ENCODE measurements at regions of chr11 and their contacts with region 1.

Region 1: DNA sequence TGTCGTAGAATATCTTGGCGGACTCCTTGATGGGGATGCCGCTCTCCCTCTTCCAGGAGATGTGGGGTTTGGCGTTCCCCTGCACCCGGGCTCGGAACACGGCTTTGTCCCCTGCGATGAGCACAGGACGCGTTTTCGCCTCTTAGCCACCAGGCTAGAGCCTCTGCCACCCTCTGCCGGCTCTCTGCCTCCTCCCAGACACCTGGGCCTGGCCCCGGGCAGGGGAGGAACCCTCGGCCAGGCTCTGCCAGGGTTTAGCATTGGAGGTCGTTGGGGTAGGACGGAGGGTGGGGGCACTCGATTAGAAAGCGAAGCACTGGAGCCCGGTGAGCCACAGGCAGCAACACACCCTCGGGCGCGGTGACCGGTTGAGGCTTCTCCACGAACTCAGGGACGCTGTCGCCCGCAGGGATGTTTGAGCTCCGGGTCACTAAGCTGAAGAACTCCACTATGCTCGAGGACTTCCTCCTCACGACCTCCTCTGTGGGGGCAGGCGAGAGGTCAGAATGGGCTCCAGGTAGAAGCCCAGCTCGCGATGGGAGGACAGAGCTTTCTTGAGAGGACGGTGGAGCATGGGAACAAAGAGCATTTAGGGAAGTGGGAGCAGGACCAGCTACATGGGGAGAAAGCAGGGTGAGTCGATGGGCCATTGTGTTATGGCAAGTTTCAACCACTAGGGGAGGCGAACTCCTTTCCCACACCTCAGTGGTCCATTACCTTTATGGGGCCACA is 4.3 kb downstream of the IGSF22 start:
- DNase-seq: peak; percentile 71
- ATAC-seq: peak; percentile 66
- H3K4me3 Mint-ChIP-seq: peak overlapping the region; percentile 76
- H3K27ac Mint-ChIP-seq: peak overlapping the region; percentile 67
- H3K4me1 Mint-ChIP-seq: no peaks in the 10 kb centered on the region
- H3K27me3 Mint-ChIP-seq: no peaks in the 10 kb centered on the region
- CTCF ChIP-seq: peak; percentile 94

Region 2: DNA sequence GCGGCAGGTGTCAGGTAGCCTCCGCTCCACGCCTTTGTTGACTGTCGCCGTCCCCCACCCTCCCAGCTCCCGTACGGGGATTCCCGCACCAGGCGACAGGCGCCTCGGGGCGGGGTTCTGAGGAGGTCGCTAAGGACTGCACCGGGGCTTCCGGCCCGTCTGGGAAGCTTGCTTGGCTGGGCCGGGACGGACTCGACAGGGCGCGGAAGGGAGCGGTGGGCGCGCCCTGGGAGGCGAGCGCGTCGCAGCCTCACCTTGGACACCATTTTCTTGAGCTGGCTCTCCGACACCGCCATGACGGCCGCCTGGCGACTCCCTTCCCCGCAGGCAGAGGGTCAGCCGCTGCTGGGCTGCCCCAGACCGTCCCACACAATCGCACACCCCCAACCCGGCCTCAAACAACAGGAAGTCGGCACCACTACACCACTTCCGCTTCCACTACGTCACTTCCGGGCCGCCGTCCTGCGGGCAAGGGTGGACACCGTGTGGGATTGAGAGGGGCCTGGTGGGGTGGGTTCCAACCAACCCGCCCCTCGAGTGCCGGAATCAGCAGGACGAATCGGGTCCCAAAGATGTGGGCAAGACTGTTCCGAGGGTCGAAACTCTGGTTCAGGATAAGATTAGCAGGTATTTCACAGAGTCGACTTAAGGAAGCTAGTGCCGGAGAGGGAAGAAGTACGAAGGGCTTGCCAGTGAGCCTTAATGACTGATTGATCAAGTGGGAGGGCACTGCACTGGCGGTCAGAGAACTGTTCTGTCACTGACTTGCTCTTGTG is 195.0 kb before region 1 on chr11 and contains the start of gene TSG101:
- CTCF ChIA-PET with region 1: interaction called, 10 read pairs
- POLR2A ChIA-PET with region 1: interaction called, 6 read pairs
- intact Hi-C with region 1: no loop called
- DNase-seq: peak; percentile 95
- ATAC-seq: peak; percentile 89
- H3K4me3 Mint-ChIP-seq: peak within 1 kb of the TSS; percentile 90
- H3K27ac Mint-ChIP-seq: peak within 1 kb of the TSS; percentile 99
- H3K4me1 Mint-ChIP-seq: peaks cover 50% of the 10 kb centered on the region
- H3K27me3 Mint-ChIP-seq: no peaks in the 10 kb centered on the region
- CTCF ChIP-seq: no peak
- total RNA-seq, gene TSG101: 34.0 to 37.4 TPM

Region 3: GRCh38 chr11:18615628-18616392 is 105.9 kb before region 1 on chr11:
- CTCF ChIA-PET with region 1: interaction called, 10 read pairs
- POLR2A ChIA-PET with region 1: interaction called, 4 read pairs
- intact Hi-C with region 1: no loop called
- DNase-seq: no peak
- ATAC-seq: peak; percentile 77
- H3K4me3 Mint-ChIP-seq: no peak overlapping the region
- H3K27ac Mint-ChIP-seq: peak overlapping the region; percentile 60
- H3K4me1 Mint-ChIP-seq: peaks cover 44% of the 10 kb centered on the region
- H3K27me3 Mint-ChIP-seq: no peaks in the 10 kb centered on the region
- CTCF ChIP-seq: no peak

Region 4: DNA sequence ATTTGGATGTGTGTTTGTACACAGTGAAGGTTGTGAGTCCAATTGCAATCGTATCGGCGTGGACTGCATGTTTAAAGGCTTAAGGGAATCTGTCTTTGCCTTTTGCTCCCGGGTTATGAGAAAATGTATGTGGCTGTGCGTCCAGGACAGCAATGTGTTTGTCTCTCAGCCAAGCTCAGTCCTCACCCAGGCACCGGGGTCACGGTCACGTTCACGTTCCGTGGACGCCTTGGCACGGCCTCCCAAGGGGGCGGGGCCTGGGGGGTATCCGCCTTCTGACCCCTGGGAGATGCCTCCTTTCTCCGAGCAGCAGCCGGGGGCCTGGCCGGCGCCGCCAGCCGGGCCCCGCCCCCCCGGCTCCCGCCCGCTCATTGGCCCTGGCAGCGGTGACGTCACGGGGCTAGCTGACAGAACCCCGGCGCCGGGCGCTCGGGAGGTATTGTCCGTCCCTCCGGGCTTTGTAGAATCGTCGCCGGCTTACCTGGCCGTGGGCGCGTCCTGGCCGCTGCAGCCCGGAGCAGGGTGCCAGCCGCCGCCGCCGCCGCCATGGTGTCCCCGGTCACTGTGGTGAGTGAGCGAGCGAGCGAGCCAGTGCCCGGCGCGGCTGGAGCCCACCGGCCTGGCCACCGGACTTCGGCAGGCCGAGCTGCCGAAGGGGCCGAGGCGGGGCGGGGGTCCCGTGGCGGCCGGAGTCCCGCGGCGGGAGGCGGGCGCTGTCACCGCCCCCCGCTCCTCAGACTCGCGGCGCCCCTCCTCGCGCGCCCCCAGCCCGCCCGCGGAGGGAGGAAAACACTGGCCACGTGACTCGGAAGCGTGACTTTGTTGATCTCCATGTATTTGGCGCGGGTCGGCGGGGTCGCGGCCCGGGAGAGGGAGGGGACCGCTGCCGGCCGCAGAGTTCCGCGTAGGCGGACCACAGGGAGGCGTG is 23.1 kb before region 1 on chr11 and contains the start of gene TMEM86A:
- CTCF ChIA-PET with region 1: interaction called, 51 read pairs
- POLR2A ChIA-PET with region 1: interaction called, 3 read pairs
- intact Hi-C with region 1: no loop called
- DNase-seq: peak; percentile 92
- ATAC-seq: peak; percentile 95
- H3K4me3 Mint-ChIP-seq: peak within 1 kb of the TSS; percentile 74
- H3K27ac Mint-ChIP-seq: peak within 1 kb of the TSS; percentile 55
- H3K4me1 Mint-ChIP-seq: peaks cover 13% of the 10 kb centered on the region
- H3K27me3 Mint-ChIP-seq: no peaks in the 10 kb centered on the region
- CTCF ChIP-seq: no peak
- total RNA-seq, gene TMEM86A: 0.11 to 0.34 TPM

Region 5: GRCh38 chr11:18731949-18732821 is 10.5 kb after region 1 on chr11:
- CTCF ChIA-PET with region 1: interaction called, 32 read pairs
- POLR2A ChIA-PET with region 1: interaction called, 6 read pairs
- intact Hi-C with region 1: no loop called
- DNase-seq: peak; percentile 82
- ATAC-seq: peak; percentile 84
- H3K4me3 Mint-ChIP-seq: no peak overlapping the region
- H3K27ac Mint-ChIP-seq: no peak overlapping the region
- H3K4me1 Mint-ChIP-seq: peaks cover 5% of the 10 kb centered on the region
- H3K27me3 Mint-ChIP-seq: no peaks in the 10 kb centered on the region
- CTCF ChIP-seq: peak; percentile 95

Region 6: DNA sequence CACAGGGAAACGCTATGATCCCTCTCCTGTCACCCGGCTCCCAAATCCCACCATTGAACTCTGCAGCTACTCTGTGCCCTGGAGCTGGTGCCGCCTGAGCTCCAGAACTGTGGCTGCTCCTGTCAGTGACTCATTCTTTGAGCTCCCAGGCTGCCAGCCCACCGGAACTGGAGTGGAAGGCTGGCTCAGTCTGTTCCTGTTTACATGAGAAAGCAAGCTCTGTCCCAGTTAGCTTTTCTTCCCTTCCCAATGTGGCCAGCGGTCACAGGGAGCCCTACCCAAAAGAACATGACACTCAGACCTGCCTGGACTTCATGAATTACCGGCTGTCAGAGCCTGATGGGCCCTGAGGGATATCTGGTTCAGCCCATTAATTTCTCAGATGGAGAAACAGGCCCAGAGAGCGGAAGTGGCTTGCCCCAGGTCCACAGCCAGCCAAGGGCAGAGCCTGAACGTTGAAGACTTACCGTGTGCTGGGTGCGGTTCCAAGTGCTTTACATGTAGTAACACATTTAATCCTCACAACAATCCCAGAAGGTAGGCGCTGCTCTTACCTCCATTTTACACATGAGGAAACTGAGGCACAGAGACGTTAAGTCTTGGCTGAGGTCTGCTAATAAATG is 28.1 kb after region 1 on chr11:
- CTCF ChIA-PET with region 1: no interaction called
- POLR2A ChIA-PET with region 1: no interaction called
- intact Hi-C with region 1: no loop called
- DNase-seq: no peak
- ATAC-seq: no peak
- H3K4me3 Mint-ChIP-seq: no peak overlapping the region
- H3K27ac Mint-ChIP-seq: no peak overlapping the region
- H3K4me1 Mint-ChIP-seq: no peaks in the 10 kb centered on the region
- H3K27me3 Mint-ChIP-seq: no peaks in the 10 kb centered on the region
- CTCF ChIP-seq: no peak

Region 7: DNA sequence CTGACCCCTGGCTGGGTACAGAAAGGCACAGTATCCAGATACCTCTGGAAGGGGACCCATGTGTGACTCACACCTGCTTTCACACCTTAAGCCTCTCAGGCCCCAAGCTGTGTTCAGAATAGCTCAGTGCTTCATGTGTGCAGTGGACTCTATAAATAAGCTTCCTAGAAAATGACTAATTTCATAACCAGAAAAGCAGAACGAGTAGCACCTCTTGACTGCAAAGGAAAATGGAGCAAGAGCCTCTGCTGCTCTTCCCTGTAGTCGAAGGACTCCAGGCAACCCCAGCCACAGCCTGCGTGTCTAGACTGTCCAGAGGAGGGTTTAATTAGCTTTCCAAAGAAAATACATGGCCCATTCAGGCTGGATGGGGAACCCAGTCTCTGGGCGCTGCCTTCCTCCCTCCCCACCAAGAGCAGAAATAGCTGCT is 46.8 kb after region 1 on chr11:
- CTCF ChIA-PET with region 1: interaction called, 13 read pairs
- POLR2A ChIA-PET with region 1: interaction called, 3 read pairs
- intact Hi-C with region 1: no loop called
- DNase-seq: peak; percentile 58
- ATAC-seq: peak; percentile 76
- H3K4me3 Mint-ChIP-seq: no peak overlapping the region
- H3K27ac Mint-ChIP-seq: no peak overlapping the region
- H3K4me1 Mint-ChIP-seq: peaks cover 28% of the 10 kb centered on the region
- H3K27me3 Mint-ChIP-seq: peaks cover 12% of the 10 kb centered on the region
- CTCF ChIP-seq: no peak

Measured in activated CD8-positive, alpha-beta T cell treated with anti-CD3 and anti-CD28 coated beads for 36 hours (primary cell).